ENCODE measurements at regions of chr17 and their contacts with region 1.

Region 1: DNA sequence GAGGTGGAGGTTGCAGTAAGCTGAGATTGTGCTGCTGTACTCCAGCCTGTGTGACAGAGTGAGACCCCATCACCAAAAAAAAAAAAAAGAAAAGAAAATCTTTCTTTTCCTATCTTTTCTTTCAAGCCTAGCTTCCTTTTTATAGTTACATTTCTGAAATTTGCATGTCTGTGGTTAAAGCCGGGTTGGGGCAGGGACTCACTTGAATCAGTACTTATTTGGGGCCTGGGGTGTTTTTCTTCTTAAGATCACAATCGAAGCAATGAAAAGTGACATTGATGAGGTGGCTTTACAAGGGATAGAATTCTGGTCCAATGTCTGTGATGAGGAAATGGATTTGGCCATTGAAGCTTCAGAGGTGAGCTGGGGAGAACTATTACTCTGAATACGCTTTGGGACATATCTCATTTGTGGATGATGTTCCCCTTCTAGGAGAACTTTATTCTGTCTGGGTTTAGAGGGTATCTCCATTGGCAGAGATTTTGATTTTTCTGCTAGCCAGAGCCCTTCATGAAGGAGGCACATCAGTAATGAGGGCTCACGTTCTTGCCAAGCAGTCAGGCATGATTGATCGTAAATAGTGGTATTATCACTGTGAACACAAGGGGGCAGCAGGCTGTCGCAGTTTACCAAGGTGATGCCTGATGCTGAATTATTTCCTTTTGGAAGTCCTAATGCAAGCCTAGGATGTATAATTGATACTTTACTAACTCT is 14.3 kb downstream of the KPNB1 start:
- DNase-seq: peak in 1 of 2 donors; percentile 42
- H3K4me3 ChIP-seq: no peak overlapping the region
- CTCF ChIP-seq: no peak
- POLR2A ChIP-seq: no peak

Region 2: GRCh38 chr17:47622179-47622549 is 41.9 kb before region 1 on chr17:
- intact Hi-C with region 1: loop called (anchors 1 kb)
- DNase-seq: no peak
- H3K4me3 ChIP-seq: no peak overlapping the region
- CTCF ChIP-seq: no peak
- POLR2A ChIP-seq: no peak

Region 3: GRCh38 chr17:47831003-47831933 is 167.2 kb after region 1 on chr17 and contains the starts of genes LRRC46 and MRPL10:
- intact Hi-C with region 1: no loop called
- DNase-seq: peak; percentile 86 to 98
- H3K4me3 ChIP-seq: peak within 1 kb of the TSS; percentile 55
- CTCF ChIP-seq: no peak
- POLR2A ChIP-seq: peak in 1 of 2 donors; percentile 51
- total RNA-seq, gene LRRC46: not detected
- total RNA-seq, gene MRPL10: 25.3 to 35.4 (median 30.2) TPM

Region 4: DNA sequence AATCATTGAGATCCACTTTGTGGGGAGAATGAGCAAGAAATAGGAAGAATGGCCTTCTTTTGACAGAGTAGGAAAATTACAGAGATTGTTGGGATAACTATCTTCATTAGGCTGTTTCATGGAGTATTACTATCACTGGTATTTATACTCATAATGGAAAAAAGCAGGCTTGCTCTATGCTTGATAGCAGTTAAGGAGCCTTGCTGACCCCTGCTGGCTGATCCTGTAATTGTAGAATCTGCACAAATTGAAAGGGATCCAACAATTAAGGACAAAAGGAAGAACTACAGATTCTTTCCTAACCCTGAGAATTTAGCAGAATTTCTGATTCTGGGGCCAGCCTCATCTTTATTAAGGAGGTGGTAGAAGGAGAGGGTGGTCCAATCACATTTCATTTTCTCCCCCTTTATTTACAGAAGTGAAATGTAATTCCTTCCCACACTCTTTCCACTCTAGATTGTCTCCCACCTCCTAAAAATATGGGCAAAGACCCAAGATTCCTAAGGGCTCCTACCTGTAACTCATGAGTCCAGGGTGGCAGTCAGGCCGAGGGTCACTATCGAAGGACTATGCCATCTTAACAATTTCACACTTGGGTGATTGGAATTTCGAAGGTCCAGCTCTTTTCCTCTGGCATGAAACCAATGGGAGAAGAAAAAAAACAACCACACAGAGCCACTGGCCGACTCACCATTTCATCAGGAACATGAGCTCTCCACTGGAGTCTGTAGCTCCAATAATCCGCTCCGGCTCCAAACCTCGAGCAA is 410.4 kb after region 1 on chr17:
- intact Hi-C with region 1: no loop called
- DNase-seq: peak in 1 of 2 donors; percentile 85
- H3K4me3 ChIP-seq: no peak overlapping the region
- CTCF ChIP-seq: peak in 1 of 3 donors; percentile 91
- POLR2A ChIP-seq: no peak

Measured in lower leg skin (tissue), 4 donors.